ENCODE measurements at regions of chr7 and their contacts with region 1.

Region 1: DNA sequence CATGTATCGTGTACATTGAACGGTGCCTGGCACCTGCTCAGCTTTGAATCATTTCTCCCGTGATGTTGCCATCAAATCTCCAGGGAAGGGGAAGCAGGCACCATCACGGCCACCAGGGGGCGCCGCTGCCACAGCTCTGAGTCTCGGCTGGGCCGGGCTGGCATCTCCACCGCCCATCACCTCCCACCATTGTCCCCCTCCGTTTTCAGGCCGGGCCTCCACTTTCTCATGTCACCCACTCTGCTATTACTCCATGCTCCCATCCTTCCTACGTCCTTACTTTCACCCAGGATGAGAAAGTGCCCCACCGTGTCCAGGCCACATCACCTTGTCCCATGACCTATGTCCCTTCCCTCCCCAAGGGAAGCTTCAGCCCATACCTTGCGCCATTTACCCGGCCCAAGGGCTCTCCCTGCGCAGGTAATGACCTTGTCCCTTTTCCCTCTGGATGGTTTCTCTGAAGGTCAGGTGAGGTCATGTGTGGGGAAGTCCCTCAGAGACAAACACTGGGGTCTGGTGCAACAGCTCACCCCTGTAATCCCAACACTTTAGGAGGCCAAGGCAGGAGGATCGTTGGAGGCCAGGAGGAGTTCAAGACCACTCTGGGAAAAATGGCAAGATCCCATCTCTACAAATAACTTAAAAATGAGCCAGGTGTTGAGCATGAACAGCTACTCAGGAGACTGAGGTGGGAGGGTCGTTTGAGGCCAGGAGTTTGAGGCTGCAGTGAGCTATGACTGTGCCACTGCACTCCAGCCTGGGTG is 31.8 kb upstream of the OCM2 start:
- DNase-seq: peak; percentile 31 to 98
- H3K4me3 ChIP-seq: no peak overlapping the region
- H3K27ac ChIP-seq: no peak overlapping the region
- H3K4me1 ChIP-seq: no peaks in the 10 kb centered on the region; a peak in 2 of 7 replicates
- H3K27me3 ChIP-seq: no peaks in the 10 kb centered on the region
- CTCF ChIP-seq: peak; percentile 92 to 97 (median 96)
- EP300 ChIP-seq: no peak
- POLR2A ChIP-seq: no peak
- RAD21 ChIP-seq: peak; percentile 94 to 98

Region 2: GRCh38 chr7:98038731-98039130 is 17.0 kb after region 1 on chr7:
- CTCF ChIA-PET with region 1: interaction called, 11 read pairs
- POLR2A ChIA-PET with region 1: no interaction called
- DNase-seq: no peak
- H3K4me3 ChIP-seq: no peak overlapping the region
- H3K27ac ChIP-seq: no peak overlapping the region
- H3K4me1 ChIP-seq: no peaks in the 10 kb centered on the region; a peak in 1 of 7 replicates
- H3K27me3 ChIP-seq: no peaks in the 10 kb centered on the region
- CTCF ChIP-seq: no peak
- EP300 ChIP-seq: no peak
- POLR2A ChIP-seq: no peak
- RAD21 ChIP-seq: no peak

Region 3: GRCh38 chr7:98106647-98107445 is 85.1 kb after region 1 on chr7 and contains the start of gene LMTK2:
- CTCF ChIA-PET with region 1: interaction called, 17 read pairs
- POLR2A ChIA-PET with region 1: no interaction called
- DNase-seq: peak; percentile 76 to 100
- H3K4me3 ChIP-seq: peak within 1 kb of the TSS; percentile 86 to 88 (median 86)
- H3K27ac ChIP-seq: peak within 1 kb of the TSS; percentile 75; the same call in 1 of the 2 replicates
- H3K4me1 ChIP-seq: peaks cover 2 to 11% (median 6%) of the 10 kb centered on the region in 4 experiments; a peak in 5 of 7 replicates
- H3K27me3 ChIP-seq: no peaks in the 10 kb centered on the region
- CTCF ChIP-seq: peak; percentile 71 to 89 (median 85)
- EP300 ChIP-seq: peak in 1 of 2 experiments; percentile 18; a peak in 1 of 3 replicates
- POLR2A ChIP-seq: peak; percentile 80 to 81
- RAD21 ChIP-seq: peak; percentile 58 to 61
- total RNA-seq, gene LMTK2: 26.8 and 30.7 TPM in 2 replicates

Region 4: GRCh38 chr7:98119256-98119918 is 97.6 kb after region 1 on chr7:
- CTCF ChIA-PET with region 1: interaction called, 11 read pairs
- POLR2A ChIA-PET with region 1: no interaction called
- DNase-seq: no peak
- H3K4me3 ChIP-seq: no peak overlapping the region
- H3K27ac ChIP-seq: no peak overlapping the region
- H3K4me1 ChIP-seq: peaks cover 0 to 4% (median 3%) of the 10 kb centered on the region in 4 experiments; a peak in 3 of 7 replicates
- H3K27me3 ChIP-seq: no peaks in the 10 kb centered on the region
- CTCF ChIP-seq: no peak
- EP300 ChIP-seq: no peak
- POLR2A ChIP-seq: no peak
- RAD21 ChIP-seq: no peak

Region 5: GRCh38 chr7:98133181-98133580 is 111.4 kb after region 1 on chr7:
- CTCF ChIA-PET with region 1: interaction called, 12 read pairs
- POLR2A ChIA-PET with region 1: no interaction called
- DNase-seq: no peak
- H3K4me3 ChIP-seq: no peak overlapping the region
- H3K27ac ChIP-seq: no peak overlapping the region
- H3K4me1 ChIP-seq: peaks cover 2 to 14% (median 8%) of the 10 kb centered on the region in 4 experiments
- H3K27me3 ChIP-seq: no peaks in the 10 kb centered on the region
- CTCF ChIP-seq: no peak
- EP300 ChIP-seq: no peak
- POLR2A ChIP-seq: no peak
- RAD21 ChIP-seq: no peak

Region 6: DNA sequence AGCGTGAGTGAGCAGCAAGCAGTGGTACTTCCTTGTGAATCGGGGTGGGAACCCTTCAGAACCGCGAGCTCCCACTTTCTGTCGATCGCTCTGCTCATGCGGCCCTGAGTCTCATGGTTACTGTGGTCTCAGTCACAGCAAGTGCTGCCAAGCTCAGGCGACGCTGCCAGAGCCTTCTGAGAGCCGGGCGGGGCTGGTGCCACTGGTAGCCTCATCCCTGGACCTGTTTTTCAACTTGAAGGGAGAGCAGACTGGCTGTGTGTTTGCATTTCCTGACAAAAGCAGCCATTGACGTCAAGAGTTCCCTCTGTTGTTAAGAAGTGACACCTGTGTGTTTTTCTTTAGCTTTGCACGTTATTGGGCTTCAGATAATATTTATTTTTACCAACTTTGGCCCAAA is 156.6 kb after region 1 on chr7:
- CTCF ChIA-PET with region 1: interaction called, 476 read pairs
- POLR2A ChIA-PET with region 1: no interaction called
- DNase-seq: no peak
- H3K4me3 ChIP-seq: no peak overlapping the region
- H3K27ac ChIP-seq: no peak overlapping the region
- H3K4me1 ChIP-seq: peaks cover 0 to 2% (median 0%) of the 10 kb centered on the region in 4 experiments; a peak in 4 of 7 replicates
- H3K27me3 ChIP-seq: no peaks in the 10 kb centered on the region
- CTCF ChIP-seq: no peak
- EP300 ChIP-seq: no peak
- POLR2A ChIP-seq: no peak
- RAD21 ChIP-seq: no peak

Region 7: DNA sequence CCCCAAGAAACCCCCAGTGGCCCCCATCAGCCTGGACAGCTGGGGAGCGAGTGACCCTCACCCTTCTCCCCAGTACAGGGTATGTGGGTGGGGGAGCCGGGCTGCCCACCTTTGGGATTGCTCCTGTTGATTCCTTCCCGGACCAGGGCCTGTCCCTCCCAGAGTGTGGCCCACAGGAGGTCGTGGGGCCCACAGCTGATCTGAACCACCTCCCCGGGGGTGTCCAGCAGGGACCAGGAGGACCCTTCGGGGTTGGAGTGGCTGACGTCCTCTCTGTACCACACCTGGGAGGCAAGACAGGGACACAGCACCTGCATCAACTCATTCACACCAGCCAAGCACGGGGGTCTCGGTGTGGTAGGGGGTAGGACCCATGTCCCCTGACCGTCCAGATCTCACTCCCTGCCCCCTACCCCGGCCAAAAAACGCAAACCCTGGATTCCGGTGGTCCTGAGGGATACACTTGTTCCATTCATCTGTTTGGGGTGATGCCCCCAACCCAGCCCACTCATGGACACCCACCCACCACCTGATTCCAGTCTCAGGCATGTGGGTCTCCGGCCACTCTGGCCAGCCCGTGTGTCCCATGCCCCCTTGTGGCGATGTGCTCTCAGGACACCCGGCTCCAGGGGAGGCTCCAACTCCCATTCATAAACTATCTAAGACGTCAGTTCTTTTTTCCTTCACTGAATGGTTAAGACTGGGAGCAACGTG is 219.3 kb after region 1 on chr7:
- CTCF ChIA-PET with region 1: interaction called, 15 read pairs
- POLR2A ChIA-PET with region 1: no interaction called
- DNase-seq: peak in 1 of 2 experiments; percentile 86
- H3K4me3 ChIP-seq: no peak overlapping the region
- H3K27ac ChIP-seq: no peak overlapping the region
- H3K4me1 ChIP-seq: peaks cover 0 to 6% (median 0%) of the 10 kb centered on the region in 4 experiments; a peak in 3 of 7 replicates
- H3K27me3 ChIP-seq: no peaks in the 10 kb centered on the region
- CTCF ChIP-seq: peak; percentile 85 to 93 (median 91)
- EP300 ChIP-seq: no peak
- POLR2A ChIP-seq: no peak
- RAD21 ChIP-seq: peak; percentile 77 to 85